Activated T-helper 1 cell treated with anti-CD3 and anti-CD28 coated beads, Interleukin-12 subunit alpha, Interleukin-12 subunit beta, Interleukin-2, Interleukin-4 antibody, amounts not matched to agents 30 ng/mL and 10 ng/mL and 1 ng/mL, durations not matched to agents 14 hours and 24 hours and 36 hours (primary cell): ENCODE measurements at regions of chr12 and their contacts with region 1.

Region 1: GRCh38 chr12:6937481-6938297 is 5.9 kb upstream of the RNU7-1 start:
- DNase-seq: peak; percentile 91
- H3K4me3 Mint-ChIP-seq: peak overlapping the region; percentile 88
- H3K27ac Mint-ChIP-seq: peak overlapping the region; percentile 98
- H3K4me1 Mint-ChIP-seq: peaks cover 59% of the 10 kb centered on the region
- H3K27me3 Mint-ChIP-seq: no peaks in the 10 kb centered on the region

Region 2: DNA sequence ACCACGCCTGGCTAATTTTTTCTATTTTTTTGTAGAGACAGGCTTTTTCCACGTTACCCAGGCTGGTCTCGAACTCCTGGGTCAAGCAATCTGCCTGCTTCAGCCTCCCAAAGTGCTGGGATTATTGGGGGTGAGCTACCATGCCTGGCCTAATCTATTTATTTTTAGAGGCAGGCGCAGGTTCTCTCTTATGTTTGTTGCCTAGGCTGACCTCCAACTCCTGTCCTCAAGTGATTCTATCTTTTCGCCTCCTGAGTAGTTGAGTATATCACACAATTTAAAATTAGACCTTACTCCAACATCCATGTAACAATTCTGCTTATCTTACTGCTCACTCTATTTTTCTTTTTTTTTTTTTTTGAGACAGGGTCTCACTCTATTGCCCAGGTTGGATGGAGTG is 283.7 kb before region 1 on chr12:
- intact Hi-C with region 1: no loop called
- DNase-seq: no peak
- H3K4me3 Mint-ChIP-seq: no peak overlapping the region
- H3K27ac Mint-ChIP-seq: no peak overlapping the region
- H3K4me1 Mint-ChIP-seq: no peaks in the 10 kb centered on the region
- H3K27me3 Mint-ChIP-seq: no peaks in the 10 kb centered on the region

Region 3: GRCh38 chr12:6867413-6868210 is 70.1 kb before region 1 on chr12 and contains the start of gene TPI1:
- intact Hi-C with region 1: loop called (anchors 1 kb)
- DNase-seq: peak; percentile 75
- H3K4me3 Mint-ChIP-seq: peak within 1 kb of the TSS; percentile 96
- H3K27ac Mint-ChIP-seq: peak within 1 kb of the TSS; percentile 99
- H3K4me1 Mint-ChIP-seq: peaks cover 53% of the 10 kb centered on the region
- H3K27me3 Mint-ChIP-seq: no peaks in the 10 kb centered on the region
- total RNA-seq, gene TPI1: 1,427 and 1,438 TPM in 2 replicates

Region 4: GRCh38 chr12:6904280-6905278 is 33.1 kb before region 1 on chr12 and contains the start of gene LRRC23:
- intact Hi-C with region 1: loop called (anchors 1 kb)
- DNase-seq: peak; percentile 97
- H3K4me3 Mint-ChIP-seq: no peak within 1 kb of the TSS
- H3K27ac Mint-ChIP-seq: no peak within 1 kb of the TSS
- H3K4me1 Mint-ChIP-seq: peaks cover 8% of the 10 kb centered on the region
- H3K27me3 Mint-ChIP-seq: no peaks in the 10 kb centered on the region
- total RNA-seq, gene LRRC23: 5.3 and 5.6 TPM in 2 replicates

Region 5: DNA sequence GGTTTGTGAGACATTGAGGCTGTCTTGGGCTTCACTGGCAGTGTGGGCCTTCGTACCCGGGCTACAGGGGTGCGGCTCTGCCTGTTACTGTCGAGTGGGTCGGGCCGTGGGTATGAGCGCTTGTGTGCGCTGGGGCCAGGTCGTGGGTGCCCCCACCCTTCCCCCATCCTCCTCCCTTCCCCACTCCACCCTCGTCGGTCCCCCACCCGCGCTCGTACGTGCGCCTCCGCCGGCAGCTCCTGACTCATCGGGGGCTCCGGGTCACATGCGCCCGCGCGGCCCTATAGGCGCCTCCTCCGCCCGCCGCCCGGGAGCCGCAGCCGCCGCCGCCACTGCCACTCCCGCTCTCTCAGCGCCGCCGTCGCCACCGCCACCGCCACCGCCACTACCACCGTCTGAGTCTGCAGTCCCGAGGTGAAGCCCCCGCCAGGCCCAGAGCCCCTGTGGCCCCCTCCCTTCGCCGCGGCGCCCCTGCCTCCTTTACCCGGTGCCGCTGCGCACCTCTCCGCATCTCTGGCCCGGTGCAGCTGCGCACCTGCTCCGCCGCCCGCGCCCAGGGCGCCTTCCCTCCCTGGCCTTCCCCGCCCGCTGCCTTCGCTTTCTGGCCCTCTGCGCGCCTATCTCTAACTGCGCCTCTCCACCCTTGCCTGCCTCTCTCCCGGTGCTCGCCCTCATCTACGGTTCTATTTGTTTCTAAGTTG is 23.3 kb before region 1 on chr12 and contains the start of gene ENO2:
- intact Hi-C with region 1: loop called (anchors 2 kb)
- DNase-seq: peak; percentile 77
- H3K4me3 Mint-ChIP-seq: peak within 1 kb of the TSS; percentile 96
- H3K27ac Mint-ChIP-seq: peak within 1 kb of the TSS; percentile 88
- H3K4me1 Mint-ChIP-seq: peaks cover 52% of the 10 kb centered on the region
- H3K27me3 Mint-ChIP-seq: no peaks in the 10 kb centered on the region
- total RNA-seq, gene ENO2: 147 and 156 TPM in 2 replicates

Region 6: DNA sequence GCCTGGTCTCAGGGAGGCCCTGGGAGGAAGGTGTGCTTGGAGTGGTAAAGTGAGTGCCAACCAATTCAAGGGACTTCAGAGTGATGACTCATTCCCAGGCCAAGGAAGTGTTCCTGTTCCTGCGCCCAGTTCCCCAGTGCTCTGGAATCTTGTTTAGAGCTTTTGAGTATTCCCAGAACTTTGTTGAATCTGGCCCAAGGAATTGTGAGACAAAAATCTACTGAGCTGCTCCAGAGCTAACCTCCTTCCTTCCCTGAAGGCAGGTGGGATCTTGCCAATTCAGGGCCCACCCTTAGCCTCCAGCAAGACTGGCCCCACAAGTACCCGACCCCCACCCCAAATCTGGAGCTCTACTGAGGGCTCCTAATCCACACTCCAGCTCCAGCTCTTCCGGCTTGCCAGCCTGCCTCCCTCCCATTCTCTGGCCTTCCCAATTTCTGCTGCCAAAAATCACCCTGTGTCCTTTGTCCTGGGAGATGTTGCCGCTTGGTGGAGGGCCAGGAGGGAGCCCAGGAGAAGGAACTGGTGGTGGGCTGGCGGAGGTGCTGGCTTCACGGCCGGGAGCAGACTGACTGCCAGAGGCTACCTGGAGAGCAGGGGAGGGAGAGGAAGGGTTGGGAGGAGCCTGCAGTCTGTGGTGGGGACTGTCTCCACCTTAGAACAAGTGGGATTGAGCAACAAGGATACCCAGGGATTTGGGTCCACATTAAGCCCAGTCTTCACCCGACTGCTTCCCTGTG is 12.0 kb before region 1 on chr12:
- intact Hi-C with region 1: loop called (anchors 1 kb)
- DNase-seq: no peak
- H3K4me3 Mint-ChIP-seq: peak overlapping the region; percentile 91
- H3K27ac Mint-ChIP-seq: peak overlapping the region; percentile 94
- H3K4me1 Mint-ChIP-seq: peaks cover 44% of the 10 kb centered on the region
- H3K27me3 Mint-ChIP-seq: peaks cover 3% of the 10 kb centered on the region